GM12878 (cell line): ENCODE measurements at regions of chr14 and their contacts with region 1.

Region 1: DNA sequence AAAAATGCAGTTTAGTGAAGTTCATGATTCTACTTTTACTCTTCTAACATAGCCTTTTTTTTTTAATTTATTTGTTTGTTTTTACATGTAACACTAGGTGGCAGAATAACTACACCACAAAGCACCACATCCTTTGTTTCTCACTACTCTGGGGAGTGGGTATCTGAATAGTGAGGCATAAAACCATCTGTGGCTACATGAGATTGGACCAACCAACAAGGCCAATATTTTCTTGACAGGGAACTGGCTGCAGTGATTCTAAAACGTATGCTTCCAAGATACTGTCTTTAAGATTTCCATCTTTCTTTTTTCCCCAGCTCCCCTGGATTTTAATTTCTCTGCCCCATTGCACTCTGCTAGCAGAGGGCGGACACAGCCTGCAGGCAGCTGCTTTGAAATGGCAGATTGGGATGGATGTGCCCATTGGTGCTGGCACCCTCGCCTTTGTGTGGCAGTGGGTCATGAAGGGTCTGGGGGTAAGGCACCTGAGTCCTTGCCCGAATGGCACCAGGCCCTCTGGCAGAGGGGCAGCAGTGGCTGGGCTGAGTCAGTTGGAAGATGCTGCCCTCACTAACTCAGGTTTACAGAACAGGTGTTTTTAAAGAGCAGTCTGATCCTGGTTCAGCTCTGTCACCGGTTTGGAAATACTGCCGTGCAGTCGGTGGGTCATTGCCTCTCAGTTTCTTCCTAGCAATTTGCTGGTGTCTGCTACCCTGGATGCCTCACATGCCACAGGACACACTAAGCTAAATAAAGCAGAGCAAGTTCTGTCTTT is 429.1 kb downstream of the RAD51B start:
- DNase-seq: peak; percentile 89
- ATAC-seq: peak; percentile 84
- H3K4me3 ChIP-seq: no peak overlapping the region
- H3K27ac ChIP-seq: peak overlapping the region; percentile 60
- H3K4me1 ChIP-seq: peaks cover 41% of the 10 kb centered on the region
- H3K27me3 ChIP-seq: no peaks in the 10 kb centered on the region
- CTCF ChIP-seq: peak; percentile 33 to 73 (median 45); a peak in 4 of 6 replicates
- EP300 ChIP-seq: no peak
- POLR2A ChIP-seq: no peak
- RAD21 ChIP-seq: peak; percentile 93

Region 2: DNA sequence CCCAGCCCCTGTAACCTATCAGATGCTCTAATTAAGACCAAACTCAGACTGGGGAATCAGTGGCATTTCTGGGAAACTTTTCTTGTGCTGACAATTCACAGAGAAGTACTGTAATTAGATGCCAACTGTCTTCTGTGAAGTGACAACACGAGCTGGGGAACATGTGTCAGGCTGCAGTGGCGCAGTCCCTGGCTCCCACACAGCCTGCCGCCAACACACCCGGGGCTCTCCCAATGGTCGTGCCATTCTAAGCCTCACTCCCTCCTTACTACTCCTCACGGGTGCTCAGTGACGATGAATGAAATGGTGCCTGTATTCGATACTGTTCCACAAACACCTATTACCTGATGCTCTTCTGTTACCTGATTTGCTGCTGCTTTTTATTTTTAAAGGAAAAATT is 1040.9 kb before region 1 on chr14:
- CTCF ChIA-PET with region 1: no interaction called
- POLR2A ChIA-PET with region 1: no interaction called
- RAD21 ChIA-PET with region 1: no interaction called
- SMC1A ChIA-PET with region 1: no interaction called
- in situ Hi-C with region 1: no loop called
- intact Hi-C with region 1: no loop called
- DNase-seq: no peak
- ATAC-seq: no peak
- H3K4me3 ChIP-seq: no peak overlapping the region
- H3K27ac ChIP-seq: no peak overlapping the region
- H3K4me1 ChIP-seq: no peaks in the 10 kb centered on the region
- H3K27me3 ChIP-seq: no peaks in the 10 kb centered on the region
- CTCF ChIP-seq: no peak
- EP300 ChIP-seq: no peak
- POLR2A ChIP-seq: no peak
- RAD21 ChIP-seq: no peak

Region 3: DNA sequence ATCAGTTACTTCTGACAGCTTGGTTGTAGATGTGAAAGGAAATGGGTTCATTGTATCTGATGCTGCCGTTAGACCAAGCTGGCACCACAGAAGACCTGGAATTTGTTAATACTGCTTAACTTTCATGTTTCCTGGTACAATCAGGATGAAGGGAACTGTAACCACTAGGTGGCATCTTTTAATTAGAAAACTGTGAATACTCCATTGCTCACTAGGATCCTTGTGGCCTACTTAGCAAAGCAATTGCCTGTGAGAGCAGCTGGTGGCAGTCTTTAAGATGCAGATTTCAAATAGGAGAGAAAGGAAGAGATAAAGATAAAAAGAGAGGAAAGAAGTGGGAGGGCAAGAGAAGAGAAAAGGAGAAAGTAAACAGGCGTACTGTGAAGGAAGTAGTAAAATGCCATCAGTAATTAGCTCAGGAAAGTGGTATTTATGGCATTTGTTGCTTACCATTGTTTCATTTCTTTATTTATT is 314.6 kb before region 1 on chr14:
- CTCF ChIA-PET with region 1: interaction called, 19 read pairs
- POLR2A ChIA-PET with region 1: no interaction called
- RAD21 ChIA-PET with region 1: interaction called, 4 read pairs
- SMC1A ChIA-PET with region 1: interaction called, 17 read pairs
- in situ Hi-C with region 1: no loop called
- intact Hi-C with region 1: no loop called
- DNase-seq: peak; percentile 42
- ATAC-seq: peak; percentile 98
- H3K4me3 ChIP-seq: no peak overlapping the region
- H3K27ac ChIP-seq: no peak overlapping the region
- H3K4me1 ChIP-seq: no peaks in the 10 kb centered on the region
- H3K27me3 ChIP-seq: no peaks in the 10 kb centered on the region
- CTCF ChIP-seq: peak; percentile 46 to 65 (median 62)
- EP300 ChIP-seq: no peak
- POLR2A ChIP-seq: no peak
- RAD21 ChIP-seq: peak; percentile 76

Region 4: GRCh38 chr14:68047906-68048305 is 200.8 kb before region 1 on chr14:
- CTCF ChIA-PET with region 1: no interaction called
- POLR2A ChIA-PET with region 1: no interaction called
- RAD21 ChIA-PET with region 1: no interaction called
- SMC1A ChIA-PET with region 1: no interaction called
- in situ Hi-C with region 1: no loop called
- intact Hi-C with region 1: no loop called
- DNase-seq: no peak
- ATAC-seq: no peak
- H3K4me3 ChIP-seq: no peak overlapping the region
- H3K27ac ChIP-seq: no peak overlapping the region
- H3K4me1 ChIP-seq: no peaks in the 10 kb centered on the region
- H3K27me3 ChIP-seq: no peaks in the 10 kb centered on the region
- CTCF ChIP-seq: no peak
- EP300 ChIP-seq: no peak
- POLR2A ChIP-seq: no peak
- RAD21 ChIP-seq: no peak

Region 5: DNA sequence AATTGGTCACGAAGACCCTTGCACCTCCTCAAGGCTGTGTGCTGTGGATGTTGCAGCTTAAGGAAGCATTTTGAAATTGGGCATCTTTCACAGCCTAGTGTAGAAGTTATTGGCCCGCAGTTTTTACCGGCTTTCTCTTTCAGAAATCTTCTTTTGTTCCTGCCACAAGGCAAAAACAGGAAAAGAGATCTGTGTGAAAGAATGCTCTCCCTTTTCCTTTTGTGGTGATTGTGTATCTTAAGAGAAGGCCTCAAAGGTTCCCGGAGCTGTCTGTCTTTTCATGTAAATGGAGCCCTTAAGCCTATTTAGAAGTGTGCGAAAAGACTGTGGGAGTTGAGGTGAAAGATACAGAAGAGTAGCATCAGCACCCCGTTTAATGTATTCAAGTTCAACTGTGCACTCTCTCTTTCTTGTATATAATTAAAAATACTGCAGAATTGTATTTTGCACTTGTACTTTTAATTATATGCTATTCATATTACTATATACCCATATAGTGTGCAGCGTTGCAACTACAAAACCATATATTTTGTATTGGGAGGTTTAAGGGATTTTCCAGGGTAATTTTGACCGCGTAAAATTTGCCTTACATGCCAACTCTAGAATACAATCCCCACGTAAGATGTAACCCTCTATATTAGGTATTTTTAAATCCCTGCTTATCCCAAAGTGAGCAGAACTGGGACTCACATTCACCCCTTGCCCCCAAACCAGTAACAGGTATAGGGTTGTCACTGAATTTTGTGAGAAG is 12.6 kb after region 1 on chr14:
- CTCF ChIA-PET with region 1: interaction called, 158 read pairs
- POLR2A ChIA-PET with region 1: interaction called, 5 read pairs
- RAD21 ChIA-PET with region 1: interaction called, 139 read pairs
- SMC1A ChIA-PET with region 1: interaction called, 237 read pairs
- in situ Hi-C with region 1: no loop called
- intact Hi-C with region 1: no loop called
- DNase-seq: no peak
- ATAC-seq: peak; percentile 60
- H3K4me3 ChIP-seq: peak overlapping the region; percentile 40; the same call in 1 of the 2 replicates
- H3K27ac ChIP-seq: peak overlapping the region; percentile 58
- H3K4me1 ChIP-seq: peaks cover 45% of the 10 kb centered on the region
- H3K27me3 ChIP-seq: no peaks in the 10 kb centered on the region
- CTCF ChIP-seq: no peak
- EP300 ChIP-seq: no peak
- POLR2A ChIP-seq: no peak
- RAD21 ChIP-seq: no peak

Region 6: DNA sequence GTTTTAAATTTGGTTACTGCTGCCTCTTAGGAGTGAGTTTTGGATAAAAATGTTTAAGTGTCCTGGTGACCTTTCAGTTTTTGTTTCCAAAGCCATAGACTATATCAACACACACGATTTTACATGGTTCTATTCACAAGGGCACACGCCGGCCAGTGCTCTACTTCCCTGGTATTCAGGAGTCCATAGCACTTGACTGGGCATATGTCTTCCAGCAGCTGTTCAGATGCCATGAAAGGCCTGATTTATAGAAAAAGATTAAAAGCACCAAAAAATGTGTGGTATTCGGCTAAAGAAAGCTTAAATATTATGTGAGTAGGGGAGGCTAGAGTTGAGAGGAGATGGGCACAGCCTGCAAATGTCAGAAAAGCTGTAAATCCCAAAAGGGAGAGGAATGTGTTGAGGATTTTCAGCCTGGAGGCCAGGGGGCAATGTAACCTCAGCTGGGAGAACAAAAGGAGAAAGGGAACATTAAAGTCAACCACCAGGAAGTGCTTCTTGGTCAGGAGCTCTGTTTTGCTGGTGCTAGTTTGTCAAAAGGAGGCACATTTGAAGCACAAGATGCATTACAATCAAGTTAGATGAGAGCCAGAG is 49.3 kb after region 1 on chr14:
- CTCF ChIA-PET with region 1: interaction called, 6 read pairs
- POLR2A ChIA-PET with region 1: interaction called, 4 read pairs
- RAD21 ChIA-PET with region 1: interaction called, 5 read pairs
- SMC1A ChIA-PET with region 1: interaction called, 122 read pairs
- in situ Hi-C with region 1: no loop called
- intact Hi-C with region 1: no loop called
- DNase-seq: no peak
- ATAC-seq: no peak
- H3K4me3 ChIP-seq: no peak overlapping the region
- H3K27ac ChIP-seq: peak overlapping the region; percentile 20; the same call in 1 of the 2 replicates
- H3K4me1 ChIP-seq: peaks cover 25% of the 10 kb centered on the region
- H3K27me3 ChIP-seq: no peaks in the 10 kb centered on the region
- CTCF ChIP-seq: no peak
- EP300 ChIP-seq: no peak
- POLR2A ChIP-seq: no peak
- RAD21 ChIP-seq: no peak

Region 7: GRCh38 chr14:68377459-68377858 is 128.8 kb after region 1 on chr14:
- CTCF ChIA-PET with region 1: interaction called, 60 read pairs
- POLR2A ChIA-PET with region 1: interaction called, 10 read pairs
- RAD21 ChIA-PET with region 1: interaction called, 84 read pairs
- SMC1A ChIA-PET with region 1: interaction called, 45 read pairs
- in situ Hi-C with region 1: no loop called
- intact Hi-C with region 1: loop called (anchors 2 kb)
- DNase-seq: no peak
- ATAC-seq: peak; percentile 28
- H3K4me3 ChIP-seq: no peak overlapping the region
- H3K27ac ChIP-seq: peak overlapping the region; percentile 83
- H3K4me1 ChIP-seq: peaks cover 67% of the 10 kb centered on the region
- H3K27me3 ChIP-seq: no peaks in the 10 kb centered on the region
- CTCF ChIP-seq: no peak
- EP300 ChIP-seq: no peak
- POLR2A ChIP-seq: no peak
- RAD21 ChIP-seq: no peak

Region 8: DNA sequence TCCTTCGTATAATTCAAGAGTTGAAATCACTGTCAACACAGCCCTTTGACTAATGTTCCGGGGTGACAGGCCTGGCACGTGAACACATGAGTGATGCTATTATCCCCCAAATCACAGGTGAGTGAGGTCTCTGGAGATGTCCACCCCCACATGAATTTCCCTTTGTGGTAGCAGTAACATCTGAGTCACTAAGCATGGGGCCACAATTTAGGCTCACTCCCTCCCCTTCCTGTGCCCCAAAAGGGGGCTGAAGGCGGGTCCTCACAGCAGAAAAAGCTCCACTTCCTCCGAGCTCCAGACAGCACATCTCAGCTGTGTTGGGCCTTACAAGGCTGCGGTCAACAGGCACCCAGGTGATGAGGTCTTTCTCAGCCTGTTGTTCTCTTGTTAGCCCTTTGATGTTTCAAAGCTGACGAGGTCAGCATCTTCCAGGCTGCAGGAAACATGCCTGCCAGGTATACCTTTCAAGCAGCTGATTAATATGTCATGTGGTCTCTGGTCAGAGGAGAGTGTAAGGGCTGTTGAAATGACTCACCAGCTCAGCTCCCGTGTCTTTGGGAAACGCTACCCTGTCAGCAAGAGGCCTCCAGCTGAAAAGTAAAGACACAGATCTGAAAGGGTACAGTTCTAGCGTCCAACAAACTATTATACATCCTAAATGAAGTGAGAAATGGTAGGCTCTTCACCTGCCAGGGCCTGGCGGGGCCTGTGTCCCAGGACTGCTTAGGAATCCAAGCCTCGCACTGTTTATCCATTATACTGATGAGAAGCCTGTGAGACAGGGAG is 436.9 kb after region 1 on chr14:
- CTCF ChIA-PET with region 1: interaction called, 3 read pairs
- POLR2A ChIA-PET with region 1: no interaction called
- RAD21 ChIA-PET with region 1: interaction called, 5 read pairs
- SMC1A ChIA-PET with region 1: interaction called, 9 read pairs
- in situ Hi-C with region 1: loop called (anchors 10 kb)
- intact Hi-C with region 1: no loop called
- DNase-seq: peak; percentile 89
- ATAC-seq: peak; percentile 90
- H3K4me3 ChIP-seq: no peak overlapping the region
- H3K27ac ChIP-seq: peak overlapping the region; percentile 67
- H3K4me1 ChIP-seq: peaks cover 48% of the 10 kb centered on the region
- H3K27me3 ChIP-seq: no peaks in the 10 kb centered on the region
- CTCF ChIP-seq: no peak
- EP300 ChIP-seq: peak in 1 of 2 experiments; percentile 85; a peak in 3 of 4 replicates
- POLR2A ChIP-seq: peak; percentile 62
- RAD21 ChIP-seq: 0 out of 2 replicates have a peak, but pooled peaks have one; percentile 0

Region 9: GRCh38 chr14:68843471-68844209 is 595.0 kb after region 1 on chr14:
- CTCF ChIA-PET with region 1: interaction called, 36 read pairs
- POLR2A ChIA-PET with region 1: no interaction called
- RAD21 ChIA-PET with region 1: interaction called, 17 read pairs
- SMC1A ChIA-PET with region 1: interaction called, 25 read pairs
- in situ Hi-C with region 1: no loop called
- intact Hi-C with region 1: no loop called
- DNase-seq: no peak
- ATAC-seq: peak; percentile 91
- H3K4me3 ChIP-seq: peak overlapping the region; percentile 25; the same call in 1 of the 2 replicates
- H3K27ac ChIP-seq: no peak overlapping the region
- H3K4me1 ChIP-seq: peaks cover 10% of the 10 kb centered on the region; the same call in 1 of the 2 replicates
- H3K27me3 ChIP-seq: no peaks in the 10 kb centered on the region
- CTCF ChIP-seq: peak; percentile 90 to 91 (median 90)
- EP300 ChIP-seq: no peak
- POLR2A ChIP-seq: no peak
- RAD21 ChIP-seq: peak; percentile 74